Breast epithelium (tissue), 4 donors: ENCODE measurements at regions of chr10 and their contacts with region 1.

Region 1: GRCh38 chr10:64682043-64682442 is 1160.8 kb downstream of the REEP3 start:
- DNase-seq: no peak
- H3K4me3 ChIP-seq: no peak overlapping the region
- H3K27ac ChIP-seq: no peak overlapping the region
- H3K4me1 ChIP-seq: no peaks in the 10 kb centered on the region
- H3K27me3 ChIP-seq: no peaks in the 10 kb centered on the region
- CTCF ChIP-seq: no peak
- POLR2A ChIP-seq: no peak

Region 2: DNA sequence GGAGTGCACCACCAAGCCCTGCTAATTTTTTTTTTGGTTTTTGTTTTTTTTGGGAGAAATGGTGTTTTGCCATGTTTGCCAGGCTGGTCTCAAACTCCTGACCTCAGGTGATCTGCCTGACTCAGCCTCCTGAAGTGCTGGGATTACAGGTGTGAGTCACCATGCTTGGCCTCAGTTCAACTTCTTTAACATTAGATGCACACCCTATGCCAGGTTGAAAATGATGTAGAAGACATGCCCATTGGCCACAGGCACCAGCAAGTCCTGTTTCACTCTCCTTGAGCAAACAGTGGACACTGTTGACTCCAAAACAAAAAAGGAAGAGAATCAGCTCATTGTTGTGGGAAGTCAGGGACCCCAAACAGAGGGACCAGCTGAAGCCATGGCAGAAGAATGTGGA is 44.4 kb after region 1 on chr10:
- intact Hi-C with region 1: no loop called
- DNase-seq: no peak
- H3K4me3 ChIP-seq: no peak overlapping the region
- H3K27ac ChIP-seq: no peak overlapping the region
- H3K4me1 ChIP-seq: no peaks in the 10 kb centered on the region
- H3K27me3 ChIP-seq: no peaks in the 10 kb centered on the region
- CTCF ChIP-seq: no peak
- POLR2A ChIP-seq: no peak

Region 3: GRCh38 chr10:64798297-64798696 is 116.3 kb after region 1 on chr10:
- intact Hi-C with region 1: loop called (anchors 10 kb)
- DNase-seq: no peak
- H3K4me3 ChIP-seq: no peak overlapping the region
- H3K27ac ChIP-seq: no peak overlapping the region
- H3K4me1 ChIP-seq: no peaks in the 10 kb centered on the region
- H3K27me3 ChIP-seq: no peaks in the 10 kb centered on the region
- CTCF ChIP-seq: no peak
- POLR2A ChIP-seq: no peak